ENCODE measurements at regions of chr5 and their contacts with region 1.

Region 1: DNA sequence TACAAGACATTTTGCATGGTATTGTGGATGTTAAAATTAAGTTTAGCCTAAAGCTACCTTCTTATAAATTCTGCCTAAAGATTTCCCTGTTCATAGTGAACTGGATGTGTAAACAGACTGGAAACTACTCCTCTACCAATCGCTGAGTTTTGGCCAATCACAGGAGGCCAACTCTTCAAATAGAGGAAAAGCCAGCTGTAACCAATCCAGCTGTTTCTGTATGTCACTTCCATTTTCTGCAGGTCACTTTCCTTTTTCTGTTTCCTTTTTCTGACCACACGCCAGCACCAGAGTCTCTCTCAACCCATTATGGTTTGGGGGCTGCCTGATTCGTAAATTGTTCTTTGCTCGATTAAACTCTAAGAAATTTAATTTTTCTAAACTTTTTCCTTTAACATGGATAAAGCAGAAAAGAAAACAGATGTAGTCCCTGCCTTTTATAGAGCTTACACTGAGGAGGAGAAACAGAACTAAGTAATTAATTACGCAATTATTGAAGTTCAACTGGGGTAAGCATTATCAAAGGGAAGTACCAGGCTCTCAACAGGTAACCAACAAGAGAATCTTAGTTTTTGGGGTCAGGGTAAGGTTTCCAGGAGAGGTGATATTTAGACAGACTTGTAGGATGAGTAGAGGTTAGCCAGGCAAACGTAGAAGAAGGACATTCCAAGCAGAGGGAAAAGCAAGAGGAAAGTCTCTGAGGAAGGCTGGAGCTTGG is 27.7 kb downstream of the RANBP3L start:
- DNase-seq: no peak
- H3K4me3 ChIP-seq: no peak overlapping the region
- H3K27ac ChIP-seq: peak overlapping the region; percentile 11
- H3K4me1 ChIP-seq: peaks cover 6% of the 10 kb centered on the region
- H3K27me3 ChIP-seq: no peaks in the 10 kb centered on the region
- CTCF ChIP-seq: no peak

Region 2: GRCh38 chr5:35672995-35673394 is 601.0 kb before region 1 on chr5:
- intact Hi-C with region 1: no loop called
- DNase-seq: no peak
- H3K4me3 ChIP-seq: no peak overlapping the region
- H3K27ac ChIP-seq: no peak overlapping the region
- H3K4me1 ChIP-seq: no peaks in the 10 kb centered on the region
- H3K27me3 ChIP-seq: no peaks in the 10 kb centered on the region
- CTCF ChIP-seq: no peak

Region 3: GRCh38 chr5:36301858-36302603 is 28.1 kb after region 1 on chr5 and contains the start of gene RANBP3L:
- intact Hi-C with region 1: loop called (anchors 5 kb)
- DNase-seq: no peak
- H3K4me3 ChIP-seq: peak within 1 kb of the TSS; percentile 53
- H3K27ac ChIP-seq: peak within 1 kb of the TSS; percentile 74
- H3K4me1 ChIP-seq: peaks cover 36% of the 10 kb centered on the region
- H3K27me3 ChIP-seq: no peaks in the 10 kb centered on the region
- CTCF ChIP-seq: no peak
- total RNA-seq, gene RANBP3L: 0.47 TPM

Region 4: DNA sequence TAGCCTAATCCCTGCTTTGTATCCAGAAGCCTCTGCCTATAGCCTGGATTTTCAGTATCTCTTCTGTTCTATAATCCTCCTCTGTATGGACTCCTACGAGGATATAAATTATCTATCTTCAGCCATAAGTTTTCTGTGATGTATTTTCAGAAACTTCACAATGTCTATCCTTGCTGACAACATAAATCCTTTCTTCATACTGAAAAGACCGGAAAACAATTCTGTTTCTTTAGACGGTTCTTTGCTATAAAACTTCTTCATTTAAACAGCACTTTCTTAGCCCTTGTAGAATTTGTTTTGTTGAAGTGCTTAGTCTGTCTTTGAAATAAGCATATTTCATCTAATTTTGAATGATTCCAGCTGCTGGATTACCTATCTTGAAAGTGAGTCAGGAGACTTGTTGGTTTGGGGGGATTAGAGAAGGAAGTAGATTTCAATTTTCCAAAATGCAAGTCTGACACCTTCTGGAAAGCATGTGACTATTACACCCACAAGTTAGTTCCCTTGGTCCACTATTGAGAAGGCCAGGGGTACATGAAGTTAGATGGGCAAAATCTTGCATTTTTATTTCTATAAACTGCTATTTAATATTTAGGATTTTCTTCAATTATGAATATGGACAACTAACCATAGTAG is 124.1 kb after region 1 on chr5:
- intact Hi-C with region 1: loop called (anchors 5 kb)
- DNase-seq: no peak
- H3K4me3 ChIP-seq: no peak overlapping the region
- H3K27ac ChIP-seq: no peak overlapping the region
- H3K4me1 ChIP-seq: no peaks in the 10 kb centered on the region
- H3K27me3 ChIP-seq: peaks cover 4% of the 10 kb centered on the region
- CTCF ChIP-seq: peak; percentile 53